Left ventricle myocardium superior (tissue), 1 donor: ENCODE measurements at regions of chr3 and their contacts with region 1.

Region 1: DNA sequence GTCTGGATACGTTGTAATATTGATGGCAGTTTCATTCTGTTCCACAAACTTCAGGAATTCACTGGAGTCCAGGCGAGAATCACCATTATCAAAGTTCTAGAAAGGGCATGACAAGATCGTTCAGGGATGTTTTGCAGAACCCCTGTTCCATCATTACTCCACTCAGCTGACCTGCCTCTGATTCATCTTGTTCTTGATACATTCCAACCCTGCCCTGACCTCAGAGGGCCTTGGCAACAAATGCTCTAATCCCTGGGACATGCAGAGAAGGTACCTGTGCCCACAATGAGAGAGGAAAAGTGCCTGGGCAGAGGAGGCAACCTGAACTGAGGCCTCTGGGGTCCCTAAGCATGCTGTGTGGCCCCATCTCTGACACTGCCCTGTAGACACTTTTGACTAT is 45.9 kb downstream of the FSTL1 start:
- DNase-seq: no peak
- ATAC-seq: peak; percentile 10

Region 2: DNA sequence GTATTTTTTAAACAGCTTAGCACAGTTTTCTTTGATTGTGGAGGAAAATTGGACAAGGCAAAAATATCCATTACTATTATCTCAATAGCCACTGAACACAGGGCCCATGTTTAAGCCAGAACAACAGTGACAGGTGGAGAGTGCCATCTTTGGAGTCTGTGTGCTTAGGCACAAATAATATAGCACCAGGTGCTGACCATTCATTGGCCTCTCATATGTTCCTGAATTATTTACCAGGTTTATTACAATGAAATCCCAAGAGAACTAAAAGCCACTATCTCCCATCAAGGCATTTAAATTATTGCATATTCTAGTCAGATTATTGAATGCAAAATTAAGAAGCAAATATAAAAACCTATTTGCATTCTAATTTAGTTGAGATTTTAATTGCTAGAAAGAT is 159.5 kb before region 1 on chr3:
- intact Hi-C with region 1: loop called (anchors 10 kb)
- DNase-seq: no peak
- ATAC-seq: no peak

Region 3: DNA sequence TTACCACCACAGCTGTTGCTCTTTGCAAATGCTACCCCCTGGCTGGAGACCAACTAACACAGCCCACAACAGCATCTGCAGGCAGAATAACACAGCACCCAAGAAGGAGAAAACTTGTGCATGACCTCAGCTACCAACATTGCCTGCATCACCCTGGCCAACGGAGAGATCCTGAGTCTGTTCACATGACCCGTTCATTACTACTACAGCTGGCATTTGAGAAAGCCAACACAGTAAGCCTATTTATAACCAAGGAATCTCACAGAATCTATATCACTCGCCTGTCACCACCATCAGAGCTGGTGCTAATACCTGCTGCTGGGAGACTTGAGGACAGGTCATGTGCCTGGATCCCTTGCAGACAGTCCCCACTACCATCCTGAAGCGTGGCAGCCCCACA is 925.8 kb after region 1 on chr3:
- intact Hi-C with region 1: no loop called
- DNase-seq: no peak
- ATAC-seq: no peak